ENCODE measurements at regions of chr12 and their contacts with region 1.

Region 1: GRCh38 chr12:25388183-25388582 is 137.5 kb upstream of the KRAS start:
- DNase-seq: no peak
- ATAC-seq: no peak
- H3K4me3 ChIP-seq: no peak overlapping the region
- H3K27ac ChIP-seq: no peak overlapping the region
- H3K4me1 ChIP-seq: peaks cover 4% of the 10 kb centered on the region
- H3K27me3 ChIP-seq: no peaks in the 10 kb centered on the region
- CTCF ChIP-seq: no peak

Region 2: GRCh38 chr12:25241167-25242020 is 146.8 kb before region 1 on chr12:
- intact Hi-C with region 1: loop called in 1 of 2 experiments (anchors 1 kb)
- DNase-seq: no peak
- ATAC-seq: peak in 2 of 4 donors; percentile 62 to 86
- H3K4me3 ChIP-seq: no peak overlapping the region
- H3K27ac ChIP-seq: no peak overlapping the region
- H3K4me1 ChIP-seq: peaks cover 1% of the 10 kb centered on the region
- H3K27me3 ChIP-seq: no peaks in the 10 kb centered on the region
- CTCF ChIP-seq: peak; percentile 81

Region 3: GRCh38 chr12:25337916-25338315 is 50.3 kb before region 1 on chr12:
- intact Hi-C with region 1: loop called (anchors 5 kb)
- DNase-seq: no peak
- ATAC-seq: no peak
- H3K4me3 ChIP-seq: no peak overlapping the region
- H3K27ac ChIP-seq: no peak overlapping the region
- H3K4me1 ChIP-seq: peaks cover 12% of the 10 kb centered on the region
- H3K27me3 ChIP-seq: no peaks in the 10 kb centered on the region
- CTCF ChIP-seq: no peak

Region 4: DNA sequence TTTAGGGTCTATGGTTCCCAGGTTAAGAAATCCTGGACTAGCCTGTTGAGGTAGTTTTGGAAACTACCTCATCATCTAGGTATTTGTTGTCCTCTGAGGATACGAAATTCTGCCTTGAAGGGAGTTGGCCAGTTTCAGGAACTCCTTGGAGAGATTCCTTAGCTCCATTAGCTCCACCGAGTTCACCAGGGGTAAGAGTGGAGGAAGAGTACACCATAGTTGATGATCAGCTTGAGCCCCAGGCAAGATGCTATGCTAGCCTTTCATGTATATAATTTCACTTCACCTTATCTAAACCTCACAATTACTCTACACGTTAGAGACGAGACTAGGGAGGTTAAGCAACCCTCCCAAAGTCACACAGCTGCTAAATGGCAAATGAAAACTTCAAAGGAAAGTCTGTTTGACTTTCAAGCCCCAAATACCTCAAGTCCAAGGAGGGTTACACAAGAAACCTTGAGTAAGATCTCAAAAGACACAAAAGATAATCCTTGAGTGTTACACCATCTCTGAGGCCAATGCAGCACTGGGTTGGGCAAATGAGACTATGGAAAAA is 40.4 kb before region 1 on chr12:
- intact Hi-C with region 1: loop called in 1 of 2 experiments (anchors 5 kb)
- DNase-seq: no peak
- ATAC-seq: peak in 1 of 4 donors; percentile 65
- H3K4me3 ChIP-seq: no peak overlapping the region
- H3K27ac ChIP-seq: peak overlapping the region; percentile 3
- H3K4me1 ChIP-seq: peaks cover 6% of the 10 kb centered on the region
- H3K27me3 ChIP-seq: no peaks in the 10 kb centered on the region
- CTCF ChIP-seq: no peak

Region 5: DNA sequence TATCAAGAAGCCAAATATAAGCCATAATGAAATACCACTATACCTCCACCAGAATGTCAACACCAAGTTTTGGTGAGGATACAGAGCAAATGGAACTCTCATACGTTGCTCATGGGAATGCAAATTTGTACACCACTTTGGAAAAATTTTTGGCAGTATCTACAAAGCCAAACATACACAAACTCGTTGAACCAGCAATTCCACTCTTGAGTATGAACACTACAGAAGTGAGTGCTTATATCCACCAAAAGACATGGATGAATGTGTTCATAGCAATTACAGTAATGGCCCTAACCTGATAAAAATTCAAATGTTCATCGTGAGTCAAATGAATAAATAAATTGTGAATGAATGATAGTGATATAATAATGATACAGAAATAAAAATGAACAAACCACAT is 1669.4 kb after region 1 on chr12:
- intact Hi-C with region 1: no loop called
- DNase-seq: no peak
- ATAC-seq: no peak
- H3K4me3 ChIP-seq: no peak overlapping the region
- H3K27ac ChIP-seq: no peak overlapping the region
- H3K4me1 ChIP-seq: no peaks in the 10 kb centered on the region
- H3K27me3 ChIP-seq: no peaks in the 10 kb centered on the region
- CTCF ChIP-seq: no peak